ENCODE measurements at regions of chr12 and their contacts with region 1.

Region 1: GRCh38 chr12:6752921-6753771 is at the start of gene MLF2:
- DNase-seq: peak; percentile 98
- H3K4me3 Mint-ChIP-seq: peak within 1 kb of the TSS; percentile 89
- H3K27ac Mint-ChIP-seq: peak within 1 kb of the TSS; percentile 98
- H3K4me1 Mint-ChIP-seq: peaks cover 29% of the 10 kb centered on the region
- H3K27me3 Mint-ChIP-seq: no peaks in the 10 kb centered on the region
- total RNA-seq, gene MLF2: 90.7 to 95.4 TPM

Region 2: GRCh38 chr12:6662906-6663742 is 90.0 kb before region 1 on chr12 and contains the start of gene ING4:
- CTCF ChIA-PET with region 1: no interaction called
- POLR2A ChIA-PET with region 1: no interaction called
- DNase-seq: peak; percentile 98
- H3K4me3 Mint-ChIP-seq: peak within 1 kb of the TSS; percentile 99
- H3K27ac Mint-ChIP-seq: peak within 1 kb of the TSS; percentile 98
- H3K4me1 Mint-ChIP-seq: peaks cover 36% of the 10 kb centered on the region
- H3K27me3 Mint-ChIP-seq: no peaks in the 10 kb centered on the region
- total RNA-seq, gene ING4: 33.7 to 40.2 TPM

Region 3: DNA sequence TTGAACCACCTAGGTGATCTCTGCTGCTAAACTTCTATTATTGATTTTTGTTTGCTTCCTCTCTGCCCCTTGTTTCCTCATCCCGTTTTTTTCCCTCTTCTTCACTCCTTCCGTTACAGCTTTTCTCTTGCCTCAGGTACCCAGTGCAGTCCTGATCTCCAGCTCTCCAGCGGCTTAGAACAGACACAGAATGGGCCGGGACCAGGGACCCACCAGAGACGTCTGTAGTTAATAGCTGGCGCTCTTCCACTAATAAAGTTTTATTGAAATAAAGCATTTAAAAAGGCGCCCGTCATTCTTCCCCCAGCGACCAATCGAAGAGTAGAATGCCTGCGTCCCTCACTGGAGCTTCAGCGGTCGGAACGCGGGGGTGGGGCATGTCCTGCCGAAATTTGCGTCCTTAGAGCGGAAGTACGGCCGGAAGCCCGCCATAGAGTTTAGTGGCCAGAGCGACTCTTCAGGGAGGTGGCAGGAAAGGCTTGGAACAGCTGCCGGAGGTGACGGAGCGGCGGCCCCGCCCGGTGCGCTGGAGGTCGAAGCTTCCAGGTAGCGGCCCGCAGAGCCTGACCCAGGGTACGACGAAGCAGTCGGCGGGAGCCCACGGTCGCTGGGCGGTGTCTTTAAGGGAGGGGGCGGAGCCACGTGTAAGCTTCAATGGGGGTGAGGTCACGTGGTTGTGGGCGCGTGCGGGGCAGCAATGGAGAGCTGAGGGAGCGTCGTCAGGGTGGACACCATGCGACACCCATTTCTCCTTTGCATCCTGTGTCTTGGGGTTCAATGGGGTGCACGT is 29.3 kb before region 1 on chr12 and contains the start of gene COPS7A:
- CTCF ChIA-PET with region 1: interaction called, 33 read pairs
- POLR2A ChIA-PET with region 1: no interaction called
- DNase-seq: peak; percentile 98
- H3K4me3 Mint-ChIP-seq: peak within 1 kb of the TSS; percentile 89
- H3K27ac Mint-ChIP-seq: peak within 1 kb of the TSS; percentile 92
- H3K4me1 Mint-ChIP-seq: peaks cover 24% of the 10 kb centered on the region
- H3K27me3 Mint-ChIP-seq: no peaks in the 10 kb centered on the region
- total RNA-seq, gene COPS7A: 29.5 to 36.8 TPM

Region 4: GRCh38 chr12:6764011-6764828 is 11.1 kb after region 1 on chr12:
- CTCF ChIA-PET with region 1: interaction called, 77 read pairs
- POLR2A ChIA-PET with region 1: no interaction called
- DNase-seq: peak; percentile 62
- H3K4me3 Mint-ChIP-seq: peak overlapping the region; percentile 12
- H3K27ac Mint-ChIP-seq: no peak overlapping the region
- H3K4me1 Mint-ChIP-seq: peaks cover 40% of the 10 kb centered on the region
- H3K27me3 Mint-ChIP-seq: peaks cover 50% of the 10 kb centered on the region

Region 5: DNA sequence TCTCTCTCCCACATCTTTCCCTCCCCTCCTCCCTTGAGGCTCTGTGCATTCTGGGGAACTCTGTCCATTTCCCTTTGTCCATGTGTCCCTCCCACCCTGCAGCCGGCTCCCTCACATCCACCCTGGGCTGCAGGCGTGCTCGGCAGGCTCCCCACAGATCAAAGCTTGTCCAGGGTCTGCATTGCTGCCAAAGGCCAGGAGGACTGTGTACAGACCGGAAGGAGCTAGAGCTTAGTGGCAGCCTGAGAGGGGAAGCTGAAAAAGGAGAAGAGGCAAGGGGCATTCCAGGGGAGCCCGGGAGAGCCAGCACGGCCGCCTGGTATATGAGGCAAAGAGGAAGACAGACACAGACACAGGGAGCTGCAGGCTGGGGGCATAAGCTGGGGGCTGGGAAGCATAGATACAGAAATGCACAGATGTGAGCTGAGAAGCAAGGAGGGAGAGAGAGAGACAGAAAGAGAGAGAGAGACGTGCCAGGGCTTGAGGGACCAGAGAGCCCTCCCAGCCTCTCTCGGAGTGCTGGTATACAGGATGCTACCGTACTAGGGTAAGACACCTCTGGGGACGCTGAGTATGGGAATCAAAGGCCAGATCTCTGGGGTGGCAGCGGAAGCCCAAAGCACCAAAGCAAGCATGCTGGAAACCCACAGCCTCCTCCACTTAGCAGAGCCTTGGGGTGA is 39.5 kb after region 1 on chr12:
- CTCF ChIA-PET with region 1: interaction called, 16 read pairs
- POLR2A ChIA-PET with region 1: interaction called, 5 read pairs
- DNase-seq: peak; percentile 78
- H3K4me3 Mint-ChIP-seq: peak overlapping the region; percentile 95
- H3K27ac Mint-ChIP-seq: peak overlapping the region; percentile 95
- H3K4me1 Mint-ChIP-seq: peaks cover 58% of the 10 kb centered on the region
- H3K27me3 Mint-ChIP-seq: no peaks in the 10 kb centered on the region

Region 6: DNA sequence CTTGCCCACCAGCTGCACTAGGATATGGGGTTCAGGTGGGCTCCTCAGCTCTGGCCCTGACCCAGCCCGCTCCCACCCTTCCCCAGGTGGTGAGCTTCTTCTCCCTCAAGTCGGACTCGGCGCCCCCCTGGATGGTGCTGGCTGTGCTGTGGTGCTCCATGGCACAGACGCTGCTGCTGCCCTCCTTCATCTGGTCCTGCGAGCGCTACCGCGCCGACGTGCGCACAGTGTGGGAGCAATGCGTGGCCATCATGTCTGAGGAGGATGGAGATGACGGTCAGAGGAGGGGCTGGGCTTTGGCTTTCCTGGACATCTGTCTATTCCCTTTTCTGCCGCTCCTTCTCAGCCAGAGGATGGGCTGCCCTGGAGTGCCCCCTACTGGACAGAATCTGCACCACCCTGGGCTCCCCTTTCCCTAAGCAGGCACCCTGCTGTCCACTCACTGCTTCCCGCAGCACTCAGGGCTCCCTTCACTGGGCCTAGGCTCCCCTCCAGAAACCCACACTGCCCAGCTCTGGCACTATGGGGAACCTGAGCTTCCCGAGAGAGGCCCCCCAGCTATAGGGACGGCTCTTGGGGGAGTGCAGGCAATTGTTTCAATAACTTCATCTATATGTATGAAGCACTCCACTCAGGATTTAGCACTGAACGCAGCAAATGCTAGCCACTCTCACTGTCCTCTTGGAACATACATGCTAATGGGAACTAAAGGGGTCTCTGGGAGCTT is 72.4 kb after region 1 on chr12:
- CTCF ChIA-PET with region 1: interaction called, 28 read pairs
- POLR2A ChIA-PET with region 1: interaction called, 3 read pairs
- DNase-seq: peak; percentile 83
- H3K4me3 Mint-ChIP-seq: no peak overlapping the region
- H3K27ac Mint-ChIP-seq: peak overlapping the region; percentile 1
- H3K4me1 Mint-ChIP-seq: peaks cover 29% of the 10 kb centered on the region
- H3K27me3 Mint-ChIP-seq: peaks cover 61% of the 10 kb centered on the region

Region 7: GRCh38 chr12:6873094-6874014 is 120.2 kb after region 1 on chr12 and contains the start of gene SPSB2:
- CTCF ChIA-PET with region 1: interaction called, 22 read pairs
- POLR2A ChIA-PET with region 1: no interaction called
- DNase-seq: peak; percentile 99
- H3K4me3 Mint-ChIP-seq: peak within 1 kb of the TSS; percentile 78
- H3K27ac Mint-ChIP-seq: peak within 1 kb of the TSS; percentile 91
- H3K4me1 Mint-ChIP-seq: peaks cover 60% of the 10 kb centered on the region
- H3K27me3 Mint-ChIP-seq: no peaks in the 10 kb centered on the region
- total RNA-seq, gene SPSB2: 15.4 to 17.3 TPM

Region 8: GRCh38 chr12:6904280-6905278 is 151.4 kb after region 1 on chr12 and contains the start of gene LRRC23:
- CTCF ChIA-PET with region 1: no interaction called
- POLR2A ChIA-PET with region 1: no interaction called
- DNase-seq: peak; percentile 99
- H3K4me3 Mint-ChIP-seq: no peak within 1 kb of the TSS
- H3K27ac Mint-ChIP-seq: no peak within 1 kb of the TSS
- H3K4me1 Mint-ChIP-seq: peaks cover 11% of the 10 kb centered on the region
- H3K27me3 Mint-ChIP-seq: no peaks in the 10 kb centered on the region
- total RNA-seq, gene LRRC23: 4.4 to 5.2 TPM

Measured in activated CD4-positive, alpha-beta T cell treated with anti-CD3 and anti-CD28 coated beads, Interleukin-2, amount 10 ng/mL, durations not matched to agents 7 days and 5 days (primary cell).